Activated CD4-positive, alpha-beta T cell treated with anti-CD3 and anti-CD28 coated beads for 36 hours (primary cell): ENCODE measurements at regions of chr6 and their contacts with region 1.

Region 1: GRCh38 chr6:155543166-155543847 is 87.7 kb upstream of the NOX3 start:
- DNase-seq: no peak
- ATAC-seq: no peak
- H3K4me3 Mint-ChIP-seq: no peak overlapping the region
- H3K27ac Mint-ChIP-seq: no peak overlapping the region
- H3K4me1 Mint-ChIP-seq: peaks cover 4% of the 10 kb centered on the region
- H3K27me3 Mint-ChIP-seq: no peaks in the 10 kb centered on the region

Region 2: DNA sequence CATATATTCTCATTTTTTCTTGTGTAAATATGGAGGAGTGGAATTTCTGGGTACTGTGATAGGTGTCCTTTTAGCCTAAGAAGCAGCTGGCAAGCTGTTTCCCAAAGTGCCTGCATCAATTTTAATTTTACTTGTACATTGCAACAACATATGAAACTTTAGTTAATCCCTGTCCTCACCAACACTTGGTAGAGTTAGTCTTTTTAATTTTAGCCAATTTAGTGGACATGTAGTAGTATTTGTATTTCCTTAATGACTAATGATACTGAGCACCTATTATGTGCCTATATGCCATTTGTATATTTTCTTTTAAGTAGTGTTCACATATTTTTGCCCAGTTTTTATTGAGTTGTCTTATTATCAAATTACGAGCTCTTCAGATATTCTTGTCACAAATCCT is 40.9 kb before region 1 on chr6:
- CTCF ChIA-PET with region 1: no interaction called
- POLR2A ChIA-PET with region 1: no interaction called
- intact Hi-C with region 1: loop called in 1 of 2 experiments (anchors 1 kb)
- DNase-seq: no peak
- ATAC-seq: no peak
- H3K4me3 Mint-ChIP-seq: no peak overlapping the region
- H3K27ac Mint-ChIP-seq: no peak overlapping the region
- H3K4me1 Mint-ChIP-seq: peaks cover 6% of the 10 kb centered on the region
- H3K27me3 Mint-ChIP-seq: no peaks in the 10 kb centered on the region